MCF 10A (cell line): ENCODE measurements at regions of chr3 and their contacts with region 1.

Region 1: DNA sequence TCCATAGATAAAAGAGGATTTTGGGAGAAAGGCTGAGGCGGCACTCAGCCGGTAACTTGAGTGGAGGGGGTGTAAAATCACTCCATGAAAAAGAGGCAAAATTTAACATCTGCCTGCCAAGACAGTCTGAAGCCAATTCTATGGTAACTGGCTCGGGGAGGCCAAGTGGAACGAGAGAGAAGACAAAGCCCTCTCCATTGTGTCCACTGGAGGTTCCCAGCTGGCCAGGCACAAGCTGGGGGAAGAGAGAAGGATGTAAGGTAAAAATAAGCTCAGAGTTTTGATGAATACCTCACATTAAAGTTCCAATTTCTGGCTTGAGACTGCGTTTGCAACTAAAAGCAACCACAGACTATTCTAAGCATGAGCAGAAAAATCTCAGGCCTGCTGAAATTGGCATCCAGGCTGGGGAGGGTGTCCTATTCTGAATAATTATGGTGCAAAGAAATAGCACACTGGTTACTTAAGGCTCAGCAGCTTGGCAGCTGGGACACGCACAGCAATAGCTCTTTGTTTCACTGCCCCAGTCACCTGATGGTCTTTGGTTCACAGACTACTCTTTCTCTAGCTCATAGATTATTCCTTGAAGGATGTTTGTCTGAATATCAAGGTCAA is 48.8 kb downstream of the CHRD start:
- DNase-seq: no peak
- H3K4me3 Mint-ChIP-seq: no peak overlapping the region
- H3K27ac Mint-ChIP-seq: no peak overlapping the region
- H3K4me1 Mint-ChIP-seq: peaks cover 10% of the 10 kb centered on the region
- H3K27me3 Mint-ChIP-seq: peaks cover 5% of the 10 kb centered on the region
- CTCF ChIP-seq: no peak

Region 2: GRCh38 chr3:184417619-184418327 is 10.9 kb before region 1 on chr3:
- CTCF ChIA-PET with region 1: interaction called, 17 read pairs
- POLR2A ChIA-PET with region 1: no interaction called
- intact Hi-C with region 1: no loop called
- DNase-seq: peak; percentile 72
- H3K4me3 Mint-ChIP-seq: no peak overlapping the region
- H3K27ac Mint-ChIP-seq: no peak overlapping the region
- H3K4me1 Mint-ChIP-seq: no peaks in the 10 kb centered on the region
- H3K27me3 Mint-ChIP-seq: peaks cover 2% of the 10 kb centered on the region
- CTCF ChIP-seq: peak; percentile 91

Region 3: GRCh38 chr3:184549793-184550577 is 121.3 kb after region 1 on chr3:
- CTCF ChIA-PET with region 1: no interaction called
- POLR2A ChIA-PET with region 1: no interaction called
- intact Hi-C with region 1: no loop called
- DNase-seq: no peak
- H3K4me3 Mint-ChIP-seq: no peak overlapping the region
- H3K27ac Mint-ChIP-seq: no peak overlapping the region
- H3K4me1 Mint-ChIP-seq: peaks cover 4% of the 10 kb centered on the region
- H3K27me3 Mint-ChIP-seq: peaks cover 35% of the 10 kb centered on the region
- CTCF ChIP-seq: no peak